ENCODE measurements at regions of chr11 and their contacts with region 1.

Region 1: GRCh38 chr11:57712256-57713150 is at the start of gene TMX2:
- DNase-seq: peak; percentile 99
- H3K4me3 Mint-ChIP-seq: peak within 1 kb of the TSS; percentile 90
- H3K27ac Mint-ChIP-seq: peak within 1 kb of the TSS; percentile 81
- H3K4me1 Mint-ChIP-seq: peaks cover 22% of the 10 kb centered on the region
- H3K27me3 Mint-ChIP-seq: no peaks in the 10 kb centered on the region
- CTCF ChIP-seq: no peak
- total RNA-seq, gene TMX2: 145 and 161 TPM in 2 replicates

Region 2: GRCh38 chr11:57657194-57658022 is 55.1 kb before region 1 on chr11 and contains the start of gene CLP1:
- CTCF ChIA-PET with region 1: interaction called, 4 read pairs
- POLR2A ChIA-PET with region 1: interaction called, 10 read pairs
- intact Hi-C with region 1: no loop called
- DNase-seq: peak; percentile 99
- H3K4me3 Mint-ChIP-seq: peak within 1 kb of the TSS; percentile 100
- H3K27ac Mint-ChIP-seq: peak within 1 kb of the TSS; percentile 97
- H3K4me1 Mint-ChIP-seq: peaks cover 13% of the 10 kb centered on the region
- H3K27me3 Mint-ChIP-seq: no peaks in the 10 kb centered on the region
- CTCF ChIP-seq: no peak
- total RNA-seq, gene CLP1: 8.6 and 9.2 TPM in 2 replicates

Region 3: DNA sequence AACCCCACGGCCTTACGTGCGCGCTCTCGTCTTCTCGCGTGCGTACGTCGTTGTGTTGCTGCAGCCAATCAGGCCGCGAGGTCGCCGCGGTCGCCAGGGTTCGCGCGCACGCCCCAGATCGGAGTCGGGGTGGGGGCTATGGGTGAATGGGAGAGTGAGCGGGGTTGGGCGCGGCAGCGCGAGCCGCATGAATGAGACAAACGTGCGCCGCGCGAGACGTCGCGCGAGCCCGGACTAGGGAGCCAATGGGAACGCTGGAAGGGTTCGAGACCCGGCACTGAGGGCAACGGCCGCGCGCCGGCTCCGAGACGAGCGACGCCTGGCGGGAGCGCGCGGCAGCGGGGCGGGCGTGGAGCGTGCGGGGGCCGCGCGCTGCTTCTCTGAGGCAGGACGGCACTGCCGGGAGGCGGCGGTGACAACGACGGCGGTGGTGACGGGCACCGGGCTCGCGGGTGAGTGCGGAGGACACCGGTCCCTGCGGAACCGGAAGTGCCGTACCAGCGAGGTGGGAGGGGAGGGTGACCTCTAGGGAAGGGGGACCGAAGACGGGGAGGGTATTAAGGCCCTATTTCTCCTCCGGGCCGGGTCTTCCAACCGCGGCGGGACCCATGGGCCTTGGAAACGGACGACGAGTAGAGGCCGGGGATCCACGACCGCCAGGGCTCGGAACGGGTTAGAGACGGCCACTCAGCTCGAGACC is 44.6 kb before region 1 on chr11 and contains the start of gene ZDHHC5:
- CTCF ChIA-PET with region 1: no interaction called
- POLR2A ChIA-PET with region 1: interaction called, 7 read pairs
- intact Hi-C with region 1: loop called (anchors 2 kb)
- DNase-seq: peak; percentile 99
- H3K4me3 Mint-ChIP-seq: peak within 1 kb of the TSS; percentile 96
- H3K27ac Mint-ChIP-seq: peak within 1 kb of the TSS; percentile 100
- H3K4me1 Mint-ChIP-seq: peaks cover 18% of the 10 kb centered on the region
- H3K27me3 Mint-ChIP-seq: no peaks in the 10 kb centered on the region
- CTCF ChIP-seq: peak; percentile 44
- total RNA-seq, gene ZDHHC5: 73.8 and 74.6 TPM in 2 replicates

Region 4: DNA sequence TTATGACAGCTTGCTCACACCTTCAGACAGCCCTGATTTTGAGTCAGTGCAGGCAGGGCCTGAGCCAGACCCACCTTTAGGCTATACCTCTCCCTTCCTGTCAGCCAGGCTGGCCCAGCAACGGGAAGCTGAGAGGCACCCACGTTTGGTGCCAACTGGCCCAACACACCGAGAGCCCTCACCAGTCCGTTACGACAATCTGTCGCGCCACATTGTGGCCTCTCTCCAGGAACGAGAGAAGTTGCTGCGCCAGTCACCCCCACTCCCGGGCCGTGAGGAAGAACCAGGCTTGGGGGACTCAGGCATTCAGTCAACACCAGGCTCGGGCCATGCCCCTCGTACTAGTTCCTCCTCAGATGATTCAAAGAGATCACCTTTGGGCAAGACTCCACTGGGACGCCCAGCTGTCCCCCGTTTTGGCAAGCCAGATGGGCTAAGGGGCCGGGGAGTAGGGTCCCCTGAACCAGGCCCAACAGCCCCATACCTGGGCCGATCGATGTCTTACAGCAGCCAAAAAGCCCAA is 13.6 kb before region 1 on chr11:
- CTCF ChIA-PET with region 1: interaction called, 5 read pairs
- POLR2A ChIA-PET with region 1: interaction called, 16 read pairs
- intact Hi-C with region 1: no loop called
- DNase-seq: no peak
- H3K4me3 Mint-ChIP-seq: no peak overlapping the region
- H3K27ac Mint-ChIP-seq: no peak overlapping the region
- H3K4me1 Mint-ChIP-seq: no peaks in the 10 kb centered on the region
- H3K27me3 Mint-ChIP-seq: no peaks in the 10 kb centered on the region
- CTCF ChIP-seq: no peak

Region 5: DNA sequence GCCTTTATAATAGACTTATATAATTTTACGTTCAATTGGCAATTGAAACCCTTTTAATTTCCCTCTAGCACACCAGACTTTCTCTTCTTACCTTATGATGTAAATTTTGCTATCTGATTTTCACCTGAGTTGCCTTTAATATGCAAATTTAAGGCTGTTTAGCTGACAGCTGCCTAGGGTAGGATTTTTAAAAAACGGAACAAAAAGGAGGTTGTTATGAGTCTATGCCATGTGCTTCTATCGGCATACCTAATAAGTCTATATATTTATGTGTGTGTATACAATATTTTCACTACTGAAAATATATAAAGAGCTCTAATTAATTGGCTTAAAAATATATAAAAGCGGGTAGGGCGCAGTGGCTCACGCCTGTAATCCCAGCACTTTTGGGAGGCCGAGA is 17.0 kb after region 1 on chr11:
- CTCF ChIA-PET with region 1: interaction called, 6 read pairs
- POLR2A ChIA-PET with region 1: interaction called, 12 read pairs
- intact Hi-C with region 1: no loop called
- DNase-seq: no peak
- H3K4me3 Mint-ChIP-seq: no peak overlapping the region
- H3K27ac Mint-ChIP-seq: no peak overlapping the region
- H3K4me1 Mint-ChIP-seq: peaks cover 10% of the 10 kb centered on the region
- H3K27me3 Mint-ChIP-seq: no peaks in the 10 kb centered on the region
- CTCF ChIP-seq: no peak

Region 6: DNA sequence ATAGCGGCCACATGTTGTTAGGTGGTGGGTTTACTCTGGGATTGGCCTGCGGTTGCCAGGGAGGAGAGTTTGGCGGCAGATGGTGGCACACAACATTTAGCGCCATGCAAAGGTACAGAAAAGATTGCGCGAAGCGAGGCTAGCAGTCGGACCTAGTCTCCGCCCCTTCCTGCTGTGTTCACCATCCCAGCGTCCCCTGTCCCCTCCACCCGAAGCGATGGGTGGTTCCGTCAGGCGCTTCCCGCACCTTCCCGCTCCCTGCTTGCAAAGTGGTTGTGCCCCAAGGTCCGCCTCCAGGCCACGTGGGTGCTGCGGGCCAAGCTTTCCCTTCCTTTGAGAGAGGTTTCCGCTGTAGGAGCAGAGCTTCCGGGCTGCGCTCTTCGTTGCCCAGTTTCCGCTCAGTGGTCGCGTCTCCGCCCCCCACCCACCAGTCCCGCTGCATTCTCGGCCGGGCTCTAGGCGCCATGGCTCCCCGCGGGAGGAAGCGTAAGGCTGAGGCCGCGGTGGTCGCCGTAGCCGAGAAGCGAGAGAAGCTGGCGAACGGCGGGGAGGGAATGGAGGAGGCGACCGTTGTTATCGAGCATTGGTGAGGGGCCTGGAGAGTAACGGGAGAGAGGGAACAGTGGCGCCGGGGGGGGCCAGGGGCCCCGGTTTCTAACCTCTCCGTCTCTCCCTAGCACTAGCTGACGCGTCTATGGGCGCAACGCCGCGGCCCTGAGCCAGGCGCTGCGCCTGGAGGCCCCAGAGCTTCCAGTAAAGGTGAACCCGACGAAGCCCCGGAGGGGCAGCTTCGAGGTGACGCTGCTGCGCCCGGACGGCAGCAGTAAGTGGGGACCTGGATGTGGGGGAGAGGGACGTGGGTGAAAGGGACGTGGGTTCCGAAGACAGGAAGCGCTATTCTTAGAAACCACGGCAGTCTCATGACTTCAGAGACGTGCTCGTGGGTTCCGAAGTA is 28.9 kb after region 1 on chr11 and contains the start of gene SELENOH:
- CTCF ChIA-PET with region 1: interaction called, 3 read pairs
- POLR2A ChIA-PET with region 1: interaction called, 42 read pairs
- intact Hi-C with region 1: no loop called
- DNase-seq: peak; percentile 90
- H3K4me3 Mint-ChIP-seq: peak within 1 kb of the TSS; percentile 89
- H3K27ac Mint-ChIP-seq: peak within 1 kb of the TSS; percentile 99
- H3K4me1 Mint-ChIP-seq: no peaks in the 10 kb centered on the region
- H3K27me3 Mint-ChIP-seq: no peaks in the 10 kb centered on the region
- CTCF ChIP-seq: no peak
- total RNA-seq, gene SELENOH: 60.3 and 84.5 TPM in 2 replicates

Region 7: GRCh38 chr11:57761301-57762234 is 49.1 kb after region 1 on chr11 and contains the start of gene CTNND1:
- CTCF ChIA-PET with region 1: interaction called, 4 read pairs
- POLR2A ChIA-PET with region 1: interaction called, 23 read pairs
- intact Hi-C with region 1: no loop called
- DNase-seq: peak; percentile 98
- H3K4me3 Mint-ChIP-seq: peak within 1 kb of the TSS; percentile 83
- H3K27ac Mint-ChIP-seq: peak within 1 kb of the TSS; percentile 96
- H3K4me1 Mint-ChIP-seq: peaks cover 25% of the 10 kb centered on the region
- H3K27me3 Mint-ChIP-seq: no peaks in the 10 kb centered on the region
- CTCF ChIP-seq: no peak
- total RNA-seq, gene CTNND1: 114 and 118 TPM in 2 replicates

Measured in MCF 10A (cell line).